ENCODE measurements at regions of chr1 and their contacts with region 1.

Region 1: GRCh38 chr1:40774266-40774998 is 9.2 kb upstream of the KCNQ4 start:
- DNase-seq: peak; percentile 69
- H3K4me3 ChIP-seq: no peak overlapping the region
- H3K27ac ChIP-seq: no peak overlapping the region
- H3K4me1 ChIP-seq: peaks cover 0 to under 1% of the 10 kb centered on the region in 2 experiments; a peak in 1 of 4 replicates
- H3K27me3 ChIP-seq: no peaks in the 10 kb centered on the region
- CTCF ChIP-seq: peak; percentile 74
- EP300 ChIP-seq: no peak
- RAD21 ChIP-seq: peak; percentile 62

Region 2: GRCh38 chr1:40633931-40634376 is 140.5 kb before region 1 on chr1:
- CTCF ChIA-PET with region 1: no interaction called
- POLR2A ChIA-PET with region 1: no interaction called
- DNase-seq: no peak
- H3K4me3 ChIP-seq: no peak overlapping the region
- H3K27ac ChIP-seq: no peak overlapping the region; a peak in 1 of 4 replicates
- H3K4me1 ChIP-seq: peaks cover 0 to 10% of the 10 kb centered on the region in 2 experiments; a peak in 1 of 4 replicates
- H3K27me3 ChIP-seq: no peaks in the 10 kb centered on the region
- CTCF ChIP-seq: no peak
- EP300 ChIP-seq: no peak
- RAD21 ChIP-seq: no peak

Region 3: DNA sequence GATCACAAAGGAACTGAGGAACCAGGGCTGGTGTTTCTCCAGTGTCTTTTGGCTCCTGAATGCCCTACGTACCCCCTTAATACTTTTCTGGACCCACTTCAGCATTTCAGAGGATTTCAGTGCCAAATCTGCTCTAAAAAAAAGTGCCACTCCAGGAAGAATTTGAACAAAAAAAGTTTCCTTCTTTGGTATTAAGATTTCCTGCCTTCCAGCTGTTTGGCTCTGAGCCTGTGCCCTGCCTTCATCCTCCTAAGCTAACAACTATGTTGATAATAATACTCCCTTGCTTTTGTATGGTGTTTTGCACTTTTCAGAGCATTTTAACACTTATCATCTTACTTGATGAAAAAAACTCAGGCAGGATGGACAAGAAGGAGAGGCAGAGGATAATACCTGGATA is 97.9 kb before region 1 on chr1:
- CTCF ChIA-PET with region 1: no interaction called
- POLR2A ChIA-PET with region 1: no interaction called
- DNase-seq: no peak
- H3K4me3 ChIP-seq: no peak overlapping the region
- H3K27ac ChIP-seq: no peak overlapping the region
- H3K4me1 ChIP-seq: peaks cover 0 to 2% of the 10 kb centered on the region in 2 experiments; a peak in 1 of 4 replicates
- H3K27me3 ChIP-seq: no peaks in the 10 kb centered on the region
- CTCF ChIP-seq: no peak
- EP300 ChIP-seq: no peak
- RAD21 ChIP-seq: no peak

Region 4: DNA sequence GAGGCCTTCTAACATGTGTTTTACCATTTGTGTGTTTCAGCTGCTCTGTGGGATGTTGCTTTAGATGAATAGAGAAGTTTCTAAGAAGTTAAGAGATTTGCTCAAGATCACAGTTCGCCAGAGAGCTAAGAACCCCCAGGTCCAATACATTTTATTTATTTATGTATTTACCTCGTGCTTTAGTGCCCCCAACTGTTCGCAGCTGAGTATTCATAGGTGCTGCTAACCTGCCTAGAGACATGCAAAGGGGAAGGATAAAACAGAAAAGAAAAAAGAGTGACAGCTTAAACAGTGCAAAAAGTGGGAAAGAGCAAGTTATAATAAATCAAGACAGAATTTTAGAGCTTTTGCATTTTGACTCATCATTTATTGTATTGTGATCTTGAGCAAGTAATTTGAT is 51.8 kb before region 1 on chr1:
- CTCF ChIA-PET with region 1: interaction called, 10 read pairs
- POLR2A ChIA-PET with region 1: interaction called, 3 read pairs
- DNase-seq: no peak
- H3K4me3 ChIP-seq: no peak overlapping the region
- H3K27ac ChIP-seq: no peak overlapping the region
- H3K4me1 ChIP-seq: peaks cover 0 to 4% of the 10 kb centered on the region in 2 experiments; a peak in 1 of 4 replicates
- H3K27me3 ChIP-seq: no peaks in the 10 kb centered on the region
- CTCF ChIP-seq: no peak; the same call in 1 of the 2 replicates
- EP300 ChIP-seq: no peak
- RAD21 ChIP-seq: no peak

Region 5: GRCh38 chr1:40753142-40753882 is 21.1 kb before region 1 on chr1:
- CTCF ChIA-PET with region 1: interaction called, 19 read pairs
- POLR2A ChIA-PET with region 1: no interaction called
- DNase-seq: no peak
- H3K4me3 ChIP-seq: no peak overlapping the region
- H3K27ac ChIP-seq: no peak overlapping the region
- H3K4me1 ChIP-seq: no peaks in the 10 kb centered on the region
- H3K27me3 ChIP-seq: no peaks in the 10 kb centered on the region
- CTCF ChIP-seq: no peak
- EP300 ChIP-seq: no peak
- RAD21 ChIP-seq: no peak

Region 6: GRCh38 chr1:40763742-40764532 is 10.5 kb before region 1 on chr1:
- CTCF ChIA-PET with region 1: interaction called, 31 read pairs
- POLR2A ChIA-PET with region 1: interaction called, 4 read pairs
- DNase-seq: no peak
- H3K4me3 ChIP-seq: no peak overlapping the region
- H3K27ac ChIP-seq: no peak overlapping the region
- H3K4me1 ChIP-seq: peaks cover 0 to 13% of the 10 kb centered on the region in 2 experiments; a peak in 2 of 4 replicates
- H3K27me3 ChIP-seq: no peaks in the 10 kb centered on the region
- CTCF ChIP-seq: no peak
- EP300 ChIP-seq: no peak
- RAD21 ChIP-seq: no peak

Region 7: GRCh38 chr1:40796939-40797667 is 22.7 kb after region 1 on chr1:
- CTCF ChIA-PET with region 1: interaction called, 16 read pairs
- POLR2A ChIA-PET with region 1: no interaction called
- DNase-seq: no peak
- H3K4me3 ChIP-seq: no peak overlapping the region
- H3K27ac ChIP-seq: no peak overlapping the region
- H3K4me1 ChIP-seq: peaks cover 0 to 27% of the 10 kb centered on the region in 2 experiments; a peak in 1 of 4 replicates
- H3K27me3 ChIP-seq: no peaks in the 10 kb centered on the region
- CTCF ChIP-seq: no peak
- EP300 ChIP-seq: no peak
- RAD21 ChIP-seq: no peak